ENCODE measurements at regions of chr5 and their contacts with region 1.

Region 1: DNA sequence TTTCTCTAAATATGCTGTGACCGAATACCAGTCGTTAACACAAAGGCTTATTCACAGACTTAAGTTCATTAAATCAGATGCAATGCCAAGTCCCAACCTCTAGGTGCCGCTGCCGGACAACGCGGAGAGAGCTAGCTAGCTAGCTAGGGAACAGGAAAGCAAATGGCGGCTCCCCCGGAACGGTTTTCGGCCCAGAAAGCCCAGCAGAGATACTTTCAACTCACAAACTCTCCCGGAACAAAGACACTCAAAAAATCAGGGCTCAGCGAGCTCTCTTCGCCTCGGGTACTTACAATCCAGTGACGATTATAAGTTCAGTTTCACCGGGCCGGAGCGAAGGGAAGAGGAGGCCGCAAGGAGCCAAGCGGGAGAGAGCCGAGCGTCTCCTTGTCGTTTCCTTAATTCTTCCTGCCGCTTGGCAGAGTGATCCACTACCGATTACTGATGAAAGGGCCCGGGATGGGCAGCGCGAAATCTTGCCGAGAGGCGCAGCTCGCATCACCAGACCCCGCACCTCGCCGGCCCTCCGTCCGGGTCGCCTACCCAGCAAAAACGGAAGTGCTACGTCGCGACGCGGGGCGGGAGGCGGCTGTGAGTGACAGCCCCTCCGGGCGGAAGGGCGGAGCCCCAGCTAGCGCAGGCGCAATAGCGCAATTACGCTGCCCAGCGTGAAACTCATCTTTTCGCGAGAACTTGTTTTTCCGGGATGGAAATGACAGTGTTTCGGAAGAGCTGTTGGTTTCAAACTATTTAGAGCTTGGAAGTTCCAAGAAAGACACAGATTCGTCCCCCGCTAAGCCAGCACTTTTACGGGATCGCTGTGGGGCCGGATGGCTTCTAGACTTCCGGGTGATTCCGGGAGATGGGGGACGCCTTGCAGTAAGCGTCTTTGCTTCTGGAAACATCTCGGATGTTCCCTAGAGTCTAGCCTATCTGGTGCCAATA is at the start of gene TAF7:
- DNase-seq: peak; percentile 95
- H3K4me3 Mint-ChIP-seq: peak within 1 kb of the TSS; percentile 99
- H3K27ac Mint-ChIP-seq: peak within 1 kb of the TSS; percentile 100
- H3K4me1 Mint-ChIP-seq: peaks cover 14% of the 10 kb centered on the region
- H3K27me3 Mint-ChIP-seq: no peaks in the 10 kb centered on the region
- CTCF ChIP-seq: peak; percentile 90
- total RNA-seq, gene TAF7: 81.3 and 94.9 TPM in 2 replicates

Region 2: DNA sequence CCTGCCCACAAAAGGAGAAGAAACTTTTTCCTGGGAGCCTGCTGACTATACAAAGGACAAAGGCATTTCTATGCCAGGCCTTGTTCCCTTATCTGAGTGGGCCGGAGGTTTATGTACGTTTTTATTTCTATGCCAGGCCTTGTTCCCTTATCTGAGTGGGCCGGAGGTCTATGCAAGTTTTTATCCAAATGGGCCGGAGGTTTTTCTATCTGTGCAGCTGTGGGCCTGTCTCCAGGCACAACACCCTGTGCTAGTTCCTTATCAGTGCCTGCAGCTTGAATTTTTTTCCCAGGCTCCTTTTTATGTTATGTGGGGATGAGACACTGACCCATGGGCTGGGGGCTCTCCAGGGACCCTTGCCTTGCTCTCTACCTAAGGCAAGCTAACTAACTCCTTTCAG is 22.1 kb before region 1 on chr5:
- CTCF ChIA-PET with region 1: interaction called, 11 read pairs
- POLR2A ChIA-PET with region 1: interaction called, 10 read pairs
- intact Hi-C with region 1: no loop called
- DNase-seq: no peak
- H3K4me3 Mint-ChIP-seq: no peak overlapping the region
- H3K27ac Mint-ChIP-seq: no peak overlapping the region
- H3K4me1 Mint-ChIP-seq: no peaks in the 10 kb centered on the region
- H3K27me3 Mint-ChIP-seq: no peaks in the 10 kb centered on the region
- CTCF ChIP-seq: no peak

Region 3: DNA sequence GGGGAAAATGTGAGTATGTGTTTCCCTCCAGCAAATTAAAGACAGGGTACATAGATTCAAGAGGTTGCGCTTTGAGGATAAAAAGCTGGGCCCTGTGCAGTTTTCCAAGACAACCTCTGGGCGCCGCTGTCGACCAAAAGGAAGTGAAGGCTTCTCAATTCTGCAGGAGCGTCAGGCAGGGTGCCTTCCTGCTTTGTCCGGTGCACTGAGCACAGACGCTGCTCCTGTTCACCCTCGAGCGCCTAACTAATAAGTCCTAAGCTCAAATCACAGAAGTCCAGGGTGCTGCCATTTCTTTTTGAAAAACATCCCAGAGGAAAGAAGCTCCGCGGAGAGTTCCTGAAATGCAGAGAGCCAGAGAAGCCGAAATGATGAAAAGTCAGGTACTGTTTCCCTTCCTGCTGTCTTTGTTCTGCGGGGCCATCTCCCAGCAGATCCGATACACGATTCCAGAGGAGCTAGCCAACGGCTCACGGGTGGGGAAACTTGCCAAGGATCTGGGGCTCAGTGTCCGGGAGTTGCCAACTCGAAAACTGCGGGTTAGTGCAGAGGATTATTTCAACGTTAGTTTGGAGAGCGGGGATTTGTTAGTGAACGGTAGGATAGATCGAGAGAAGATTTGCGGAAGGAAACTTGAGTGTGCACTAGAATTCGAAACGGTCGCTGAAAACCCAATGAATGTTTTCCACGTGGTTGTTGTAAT is 29.6 kb after region 1 on chr5 and contains the start of gene PCDHGB1:
- CTCF ChIA-PET with region 1: interaction called, 17 read pairs
- POLR2A ChIA-PET with region 1: interaction called, 5 read pairs
- intact Hi-C with region 1: no loop called
- DNase-seq: peak; percentile 58
- H3K4me3 Mint-ChIP-seq: peak within 1 kb of the TSS; percentile 30
- H3K27ac Mint-ChIP-seq: no peak within 1 kb of the TSS
- H3K4me1 Mint-ChIP-seq: no peaks in the 10 kb centered on the region
- H3K27me3 Mint-ChIP-seq: no peaks in the 10 kb centered on the region
- CTCF ChIP-seq: peak; percentile 29
- total RNA-seq, gene PCDHGB1: 0.19 and 0.59 TPM in 2 replicates

Region 4: DNA sequence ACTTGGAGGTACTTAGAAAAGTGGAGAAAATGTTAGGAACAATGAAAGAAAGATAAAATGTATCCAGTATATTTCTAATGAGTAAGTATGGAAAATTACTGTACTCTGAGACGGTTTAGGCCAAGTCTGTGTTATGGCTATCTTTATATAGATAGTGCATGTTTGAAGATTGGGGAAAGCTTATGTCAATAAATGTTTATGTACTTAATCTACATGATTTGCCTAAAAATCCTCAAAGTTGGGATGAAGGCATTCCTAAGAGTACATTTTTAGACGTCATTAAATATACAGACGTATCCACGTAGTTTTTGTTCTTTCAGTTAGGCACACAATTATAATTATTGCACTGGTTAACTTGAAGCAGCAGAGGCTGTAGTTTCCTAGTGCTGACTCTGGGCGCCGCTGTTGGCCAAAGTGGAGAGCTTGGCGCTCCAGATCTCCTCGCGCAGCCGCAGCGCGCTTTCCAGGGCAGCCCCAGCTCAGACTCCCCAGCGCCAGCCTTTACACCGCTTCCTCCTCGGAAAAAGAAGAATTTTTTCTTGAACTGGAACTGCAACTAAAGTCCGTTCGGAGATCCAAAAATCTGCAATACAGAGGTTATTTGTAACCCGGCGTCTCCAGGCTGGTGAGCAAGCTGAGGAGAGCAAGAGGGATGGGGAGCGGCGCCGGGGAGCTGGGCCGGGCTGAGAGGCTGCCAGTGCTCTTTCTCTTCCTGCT is 66.9 kb after region 1 on chr5 and contains the start of gene PCDHGB4:
- CTCF ChIA-PET with region 1: interaction called, 16 read pairs
- POLR2A ChIA-PET with region 1: interaction called, 4 read pairs
- intact Hi-C with region 1: no loop called
- DNase-seq: no peak
- H3K4me3 Mint-ChIP-seq: no peak within 1 kb of the TSS
- H3K27ac Mint-ChIP-seq: no peak within 1 kb of the TSS
- H3K4me1 Mint-ChIP-seq: no peaks in the 10 kb centered on the region
- H3K27me3 Mint-ChIP-seq: no peaks in the 10 kb centered on the region
- CTCF ChIP-seq: no peak
- total RNA-seq, gene PCDHGB4: 0.49 and 0.79 TPM in 2 replicates

Region 5: DNA sequence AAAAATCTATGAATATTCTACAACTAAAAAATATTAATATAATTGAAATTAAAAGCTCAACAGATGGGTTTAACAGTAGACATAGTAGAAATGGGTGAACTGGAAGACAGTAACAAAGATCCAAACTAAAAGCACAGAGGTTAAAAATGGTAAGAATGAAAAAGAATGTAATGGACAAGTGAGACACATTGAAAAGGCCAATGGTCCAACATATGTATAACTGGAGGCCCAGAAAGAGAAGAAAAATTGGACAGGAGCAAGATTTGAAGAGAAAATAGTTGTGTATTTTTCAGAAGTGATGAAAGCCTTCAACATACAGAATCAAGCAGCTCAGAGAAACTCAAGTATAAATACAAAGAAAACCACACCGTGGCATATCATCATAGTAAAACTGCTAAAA is 227.0 kb after region 1 on chr5:
- CTCF ChIA-PET with region 1: interaction called, 11 read pairs
- POLR2A ChIA-PET with region 1: interaction called, 3 read pairs
- intact Hi-C with region 1: no loop called
- DNase-seq: peak; percentile 39
- H3K4me3 Mint-ChIP-seq: no peak overlapping the region
- H3K27ac Mint-ChIP-seq: no peak overlapping the region
- H3K4me1 Mint-ChIP-seq: no peaks in the 10 kb centered on the region
- H3K27me3 Mint-ChIP-seq: no peaks in the 10 kb centered on the region
- CTCF ChIP-seq: no peak

Region 6: GRCh38 chr5:141866149-141867120 is 545.9 kb after region 1 on chr5:
- CTCF ChIA-PET with region 1: no interaction called
- POLR2A ChIA-PET with region 1: no interaction called
- intact Hi-C with region 1: no loop called
- DNase-seq: no peak
- H3K4me3 Mint-ChIP-seq: no peak overlapping the region
- H3K27ac Mint-ChIP-seq: no peak overlapping the region
- H3K4me1 Mint-ChIP-seq: peaks cover 8% of the 10 kb centered on the region
- H3K27me3 Mint-ChIP-seq: no peaks in the 10 kb centered on the region
- CTCF ChIP-seq: no peak

Region 7: DNA sequence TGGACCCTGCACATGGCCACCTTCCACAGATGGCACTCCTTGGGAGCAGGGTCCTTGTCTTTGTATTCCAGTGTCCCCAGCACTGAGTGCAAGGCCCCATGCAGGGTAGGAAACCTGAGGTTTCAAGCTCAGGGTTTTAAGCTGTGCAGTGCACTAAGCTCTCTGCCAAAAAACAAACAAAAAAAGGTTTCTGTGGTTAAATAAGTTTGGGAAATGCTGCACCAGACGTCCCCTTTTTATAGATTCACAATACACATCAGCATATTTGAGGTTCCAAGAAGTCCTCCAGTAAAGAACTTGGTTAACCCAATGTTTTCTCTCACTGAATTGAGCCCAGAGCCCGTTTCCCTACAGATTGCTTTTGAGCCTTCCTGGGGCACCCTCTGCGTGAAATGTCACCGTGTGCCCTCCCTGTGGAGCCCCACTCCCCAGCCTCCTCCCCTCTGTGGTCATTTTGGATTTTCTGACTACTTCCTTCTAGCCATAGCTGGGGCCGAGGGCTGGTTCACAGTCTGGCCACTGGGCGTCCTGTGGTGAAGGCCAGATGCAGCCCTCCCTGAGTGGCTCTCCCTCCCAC is 620.3 kb after region 1 on chr5:
- CTCF ChIA-PET with region 1: no interaction called
- POLR2A ChIA-PET with region 1: no interaction called
- intact Hi-C with region 1: no loop called
- DNase-seq: no peak
- H3K4me3 Mint-ChIP-seq: no peak overlapping the region
- H3K27ac Mint-ChIP-seq: peak overlapping the region; percentile 28
- H3K4me1 Mint-ChIP-seq: peaks cover 9% of the 10 kb centered on the region
- H3K27me3 Mint-ChIP-seq: no peaks in the 10 kb centered on the region
- CTCF ChIP-seq: no peak